GM12878 (cell line): ENCODE measurements at regions of chr21 and their contacts with region 1.

Region 1: GRCh38 chr21:36976882-36977651 is 10.6 kb upstream of the HLCS start:
- DNase-seq: peak; percentile 59
- ATAC-seq: peak; percentile 78
- H3K4me3 ChIP-seq: 0 out of 2 replicates have a peak overlapping the region, but pooled peaks have one; percentile 17
- H3K27ac ChIP-seq: no peak overlapping the region
- H3K4me1 ChIP-seq: peaks cover 15% of the 10 kb centered on the region
- H3K27me3 ChIP-seq: no peaks in the 10 kb centered on the region
- CTCF ChIP-seq: peak; percentile 60 to 92 (median 75); a peak in 5 of 6 replicates
- EP300 ChIP-seq: no peak
- POLR2A ChIP-seq: no peak
- RAD21 ChIP-seq: peak; percentile 79

Region 2: GRCh38 chr21:36134803-36135390 is 842.2 kb before region 1 on chr21 and contains the start of gene CBR3:
- CTCF ChIA-PET with region 1: no interaction called
- POLR2A ChIA-PET with region 1: no interaction called
- RAD21 ChIA-PET with region 1: no interaction called
- SMC1A ChIA-PET with region 1: no interaction called
- in situ Hi-C with region 1: no loop called
- intact Hi-C with region 1: no loop called
- DNase-seq: no peak
- ATAC-seq: peak; percentile 42
- H3K4me3 ChIP-seq: peak within 1 kb of the TSS; percentile 73
- H3K27ac ChIP-seq: no peak within 1 kb of the TSS
- H3K4me1 ChIP-seq: peaks cover 15% of the 10 kb centered on the region
- H3K27me3 ChIP-seq: peaks cover 1 to 7% of the 10 kb centered on the region in 2 experiments; a peak in 3 of 4 replicates
- CTCF ChIP-seq: no peak
- EP300 ChIP-seq: no peak
- POLR2A ChIP-seq: no peak
- RAD21 ChIP-seq: no peak
- polyA plus RNA-seq, gene CBR3: 4.4 to 11.9 TPM

Region 3: GRCh38 chr21:36661511-36662309 is 315.4 kb before region 1 on chr21:
- CTCF ChIA-PET with region 1: no interaction called
- POLR2A ChIA-PET with region 1: no interaction called
- RAD21 ChIA-PET with region 1: no interaction called
- SMC1A ChIA-PET with region 1: no interaction called
- in situ Hi-C with region 1: no loop called
- intact Hi-C with region 1: no loop called
- DNase-seq: no peak
- ATAC-seq: no peak
- H3K4me3 ChIP-seq: no peak overlapping the region
- H3K27ac ChIP-seq: no peak overlapping the region
- H3K4me1 ChIP-seq: no peaks in the 10 kb centered on the region
- H3K27me3 ChIP-seq: peaks cover 0 to 3% of the 10 kb centered on the region in 2 experiments; a peak in 1 of 4 replicates
- CTCF ChIP-seq: no peak
- EP300 ChIP-seq: no peak
- POLR2A ChIP-seq: no peak
- RAD21 ChIP-seq: no peak

Region 4: GRCh38 chr21:36989699-36990507 is 12.8 kb after region 1 on chr21:
- CTCF ChIA-PET with region 1: interaction called, 94 read pairs
- POLR2A ChIA-PET with region 1: interaction called, 12 read pairs
- RAD21 ChIA-PET with region 1: interaction called, 19 read pairs
- SMC1A ChIA-PET with region 1: interaction called, 23 read pairs
- in situ Hi-C with region 1: no loop called
- intact Hi-C with region 1: no loop called
- DNase-seq: peak; percentile 45
- ATAC-seq: peak; percentile 97
- H3K4me3 ChIP-seq: peak overlapping the region; percentile 76
- H3K27ac ChIP-seq: peak overlapping the region; percentile 56
- H3K4me1 ChIP-seq: no peaks in the 10 kb centered on the region
- H3K27me3 ChIP-seq: no peaks in the 10 kb centered on the region
- CTCF ChIP-seq: peak; percentile 53 to 64 (median 60); a peak in 5 of 6 replicates
- EP300 ChIP-seq: no peak
- POLR2A ChIP-seq: peak; percentile 76
- RAD21 ChIP-seq: peak; percentile 43

Region 5: GRCh38 chr21:37009740-37010341 is 32.8 kb after region 1 on chr21:
- CTCF ChIA-PET with region 1: interaction called, 57 read pairs
- POLR2A ChIA-PET with region 1: no interaction called
- RAD21 ChIA-PET with region 1: interaction called, 20 read pairs
- SMC1A ChIA-PET with region 1: interaction called, 10 read pairs
- in situ Hi-C with region 1: no loop called
- intact Hi-C with region 1: loop called (anchors 1 kb)
- DNase-seq: peak; percentile 54
- ATAC-seq: peak; percentile 99
- H3K4me3 ChIP-seq: peak overlapping the region; percentile 37; the same call in 1 of the 2 replicates
- H3K27ac ChIP-seq: no peak overlapping the region
- H3K4me1 ChIP-seq: no peaks in the 10 kb centered on the region; the same call in 1 of the 2 replicates
- H3K27me3 ChIP-seq: peaks cover 2 to 13% of the 10 kb centered on the region in 2 experiments; a peak in 2 of 4 replicates
- CTCF ChIP-seq: peak; percentile 85 to 87 (median 87)
- EP300 ChIP-seq: 0 out of 4 replicates have a peak, but pooled peaks of 1 of the 2 experiments have one; percentile 6
- POLR2A ChIP-seq: no peak
- RAD21 ChIP-seq: peak; percentile 69

Region 6: GRCh38 chr21:37079211-37079824 is 102.3 kb after region 1 on chr21:
- CTCF ChIA-PET with region 1: interaction called, 10 read pairs
- POLR2A ChIA-PET with region 1: interaction called, 3 read pairs
- RAD21 ChIA-PET with region 1: no interaction called
- SMC1A ChIA-PET with region 1: interaction called, 6 read pairs
- in situ Hi-C with region 1: no loop called
- intact Hi-C with region 1: loop called (anchors 5 kb)
- DNase-seq: no peak
- ATAC-seq: peak; percentile 68
- H3K4me3 ChIP-seq: no peak overlapping the region
- H3K27ac ChIP-seq: no peak overlapping the region
- H3K4me1 ChIP-seq: no peaks in the 10 kb centered on the region
- H3K27me3 ChIP-seq: no peaks in the 10 kb centered on the region
- CTCF ChIP-seq: peak; percentile 7 to 33 (median 26); a peak in 4 of 6 replicates
- EP300 ChIP-seq: no peak
- POLR2A ChIP-seq: no peak
- RAD21 ChIP-seq: no peak